ENCODE measurements at regions of chr15 and their contacts with region 1.

Region 1: GRCh38 chr15:39171944-39172368 is 408.9 kb upstream of the THBS1 start:
- DNase-seq: peak; percentile 99
- ATAC-seq: peak; percentile 91
- H3K4me3 ChIP-seq: no peak overlapping the region
- H3K27ac ChIP-seq: peak overlapping the region; percentile 91
- H3K4me1 ChIP-seq: peaks cover 14% of the 10 kb centered on the region
- H3K27me3 ChIP-seq: no peaks in the 10 kb centered on the region
- CTCF ChIP-seq: peak; percentile 86
- POLR2A ChIP-seq: peak; percentile 48
- RAD21 ChIP-seq: peak; percentile 99

Region 2: DNA sequence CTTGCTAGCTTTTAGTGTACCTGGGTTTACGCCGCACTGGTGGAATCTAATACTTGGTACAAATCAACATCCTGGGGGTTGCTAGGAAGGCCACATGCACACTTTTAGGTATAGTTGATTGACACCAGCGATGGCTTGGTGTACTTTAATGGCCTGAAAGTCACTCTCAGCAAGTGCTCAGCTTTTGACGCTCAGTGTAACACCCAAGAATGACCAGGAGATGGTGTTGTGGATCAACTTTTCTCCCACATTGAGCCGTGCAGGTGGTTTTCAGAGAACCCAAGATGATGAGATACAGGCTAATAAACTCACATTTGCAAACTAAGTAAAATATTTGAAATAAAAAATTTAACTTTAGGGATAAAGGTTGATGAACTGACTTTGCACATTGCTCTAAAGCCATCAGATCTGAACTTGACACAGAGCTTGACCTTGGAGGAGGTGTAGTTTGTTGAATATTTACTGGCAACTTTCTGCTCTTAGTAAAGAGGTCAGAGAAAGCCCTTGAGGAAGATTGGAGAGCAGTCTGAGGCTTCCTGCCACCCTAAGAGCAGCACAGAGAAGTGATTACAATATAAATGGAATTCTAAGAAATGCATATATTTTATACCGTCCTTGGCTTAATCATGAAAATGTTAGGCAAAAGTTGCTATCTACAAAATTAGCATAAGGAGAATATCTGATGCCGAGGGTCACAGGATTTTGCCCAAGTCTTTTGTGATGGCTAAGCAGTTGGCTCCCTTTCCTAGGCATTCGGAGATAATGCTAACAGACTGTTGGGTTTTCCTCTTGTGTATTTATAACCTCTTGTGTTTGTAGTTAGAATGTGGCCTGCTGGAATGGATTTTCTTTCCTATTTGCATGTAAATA is 463.9 kb before region 1 on chr15:
- CTCF ChIA-PET with region 1: no interaction called
- POLR2A ChIA-PET with region 1: no interaction called
- dilution Hi-C with region 1: no loop called
- in situ Hi-C with region 1: loop called (anchors 5 kb)
- intact Hi-C with region 1: loop called (anchors 2 kb)
- DNase-seq: peak; percentile 80
- ATAC-seq: peak; percentile 93
- H3K4me3 ChIP-seq: no peak overlapping the region
- H3K27ac ChIP-seq: peak overlapping the region; percentile 74; the same call in 1 of the 2 replicates
- H3K4me1 ChIP-seq: peaks cover 7% of the 10 kb centered on the region
- H3K27me3 ChIP-seq: no peaks in the 10 kb centered on the region
- CTCF ChIP-seq: peak; percentile 82
- POLR2A ChIP-seq: no peak; the same call in 1 of the 2 replicates
- RAD21 ChIP-seq: peak; percentile 95

Region 3: DNA sequence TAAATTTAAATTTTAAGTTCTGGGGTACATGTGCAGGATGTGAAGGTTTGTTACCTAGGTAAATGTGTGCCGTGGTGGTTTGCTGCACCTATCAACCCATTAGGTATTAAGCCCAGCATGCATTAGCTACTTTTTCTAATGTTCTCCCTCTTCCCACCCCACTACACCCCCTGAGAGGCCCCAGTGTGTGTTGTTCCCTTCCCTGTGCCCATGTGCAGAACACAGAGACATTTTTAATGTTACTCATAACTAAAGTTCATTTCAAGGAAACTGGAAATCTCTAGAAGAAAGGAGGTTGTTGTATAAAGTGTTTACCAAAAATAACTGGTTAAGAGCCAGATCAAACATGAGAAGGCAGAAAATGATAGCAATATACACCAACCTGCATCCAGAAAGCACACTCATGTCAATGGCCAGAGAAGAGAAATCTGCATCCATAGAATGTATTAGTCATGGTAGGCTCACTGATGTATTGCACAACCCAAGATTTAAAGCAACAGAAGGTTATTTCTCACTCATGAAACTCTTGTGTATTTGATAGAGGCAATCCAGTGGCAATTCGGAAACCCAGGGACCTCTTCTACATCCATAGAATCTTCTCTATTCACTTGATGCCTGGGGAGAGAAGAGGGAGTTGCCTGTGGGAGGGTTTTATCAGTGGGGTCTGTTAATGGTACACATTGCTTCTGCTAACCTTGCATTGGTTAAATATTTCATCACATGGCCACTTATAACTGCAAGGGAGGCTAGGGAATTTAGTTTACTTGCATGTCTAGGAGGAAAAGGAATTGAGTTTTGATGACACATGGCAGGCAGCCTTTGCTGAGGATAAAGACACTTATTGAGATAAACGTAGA is 285.4 kb before region 1 on chr15:
- CTCF ChIA-PET with region 1: no interaction called
- POLR2A ChIA-PET with region 1: interaction called, 3 read pairs
- dilution Hi-C with region 1: no loop called
- in situ Hi-C with region 1: no loop called
- intact Hi-C with region 1: loop called (anchors 2 kb)
- DNase-seq: peak; percentile 93
- ATAC-seq: peak; percentile 70
- H3K4me3 ChIP-seq: peak overlapping the region; percentile 39
- H3K27ac ChIP-seq: peak overlapping the region; percentile 97
- H3K4me1 ChIP-seq: peaks cover 22% of the 10 kb centered on the region
- H3K27me3 ChIP-seq: no peaks in the 10 kb centered on the region
- CTCF ChIP-seq: no peak
- POLR2A ChIP-seq: no peak; the same call in 1 of the 2 replicates
- RAD21 ChIP-seq: 0 out of 2 replicates have a peak, but pooled peaks have one; percentile 9

Region 4: DNA sequence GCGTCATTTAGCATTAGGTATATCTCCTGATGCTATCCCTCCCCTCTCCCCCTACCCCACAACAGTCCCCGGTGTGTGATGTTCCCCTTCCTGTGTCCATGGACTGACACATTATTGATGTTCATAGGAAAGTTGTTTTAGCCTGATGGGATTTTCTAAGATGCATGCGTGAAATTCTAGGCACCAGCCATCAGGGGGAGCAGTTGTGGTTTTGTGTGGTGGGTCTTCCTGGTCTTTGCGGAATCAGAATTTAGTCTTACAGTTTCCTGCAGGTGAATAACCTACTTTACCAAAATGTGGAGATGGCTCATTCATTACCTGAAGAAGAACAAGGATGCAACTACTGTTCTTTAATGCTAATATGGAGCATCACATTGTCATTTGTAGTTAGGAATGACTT is 46.1 kb before region 1 on chr15:
- CTCF ChIA-PET with region 1: interaction called, 4 read pairs
- POLR2A ChIA-PET with region 1: no interaction called
- dilution Hi-C with region 1: no loop called
- in situ Hi-C with region 1: no loop called
- intact Hi-C with region 1: loop called (anchors 2 kb)
- DNase-seq: peak; percentile 68
- ATAC-seq: no peak
- H3K4me3 ChIP-seq: no peak overlapping the region
- H3K27ac ChIP-seq: peak overlapping the region; percentile 39; the same call in 1 of the 2 replicates
- H3K4me1 ChIP-seq: peaks cover 37% of the 10 kb centered on the region
- H3K27me3 ChIP-seq: no peaks in the 10 kb centered on the region
- CTCF ChIP-seq: peak; percentile 64
- POLR2A ChIP-seq: no peak
- RAD21 ChIP-seq: peak; percentile 62

Region 5: DNA sequence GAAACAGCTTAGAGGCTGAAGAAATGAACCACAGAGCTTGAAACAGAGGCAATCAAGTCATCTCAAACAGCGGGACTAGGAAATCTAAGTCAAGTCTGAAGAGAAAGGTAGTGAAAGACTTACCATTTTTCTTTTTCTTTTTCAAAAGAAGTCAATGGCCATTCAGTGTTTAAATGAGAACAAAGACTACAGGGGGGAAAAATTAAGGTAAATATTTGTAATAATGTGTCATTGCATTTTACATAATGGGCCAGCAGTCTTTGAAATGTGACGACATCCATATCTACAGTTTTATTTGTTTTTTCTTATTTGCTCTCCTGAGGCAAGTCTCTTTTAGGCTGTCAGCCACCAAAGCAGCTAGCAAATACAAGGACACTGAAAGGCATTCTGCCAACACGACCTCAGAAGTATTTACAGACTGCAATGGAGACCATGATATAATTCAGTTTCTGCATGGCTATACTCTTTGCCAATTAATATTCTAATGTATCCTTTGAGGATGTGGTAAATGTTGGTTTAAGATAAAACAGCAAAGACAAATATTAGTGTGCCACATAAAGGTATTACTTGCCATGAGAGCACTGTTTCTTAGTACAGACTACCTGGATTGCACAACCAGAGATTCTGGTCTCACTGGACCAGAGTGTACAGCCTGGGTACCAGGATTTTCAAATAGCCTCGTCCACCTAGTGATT is 101.9 kb after region 1 on chr15:
- CTCF ChIA-PET with region 1: no interaction called
- POLR2A ChIA-PET with region 1: no interaction called
- dilution Hi-C with region 1: no loop called
- in situ Hi-C with region 1: no loop called
- intact Hi-C with region 1: no loop called
- DNase-seq: peak; percentile 44
- ATAC-seq: no peak
- H3K4me3 ChIP-seq: no peak overlapping the region
- H3K27ac ChIP-seq: no peak overlapping the region
- H3K4me1 ChIP-seq: peaks cover 24% of the 10 kb centered on the region
- H3K27me3 ChIP-seq: no peaks in the 10 kb centered on the region
- CTCF ChIP-seq: no peak
- POLR2A ChIP-seq: no peak
- RAD21 ChIP-seq: no peak

Region 6: GRCh38 chr15:39472621-39473297 is 300.8 kb after region 1 on chr15:
- CTCF ChIA-PET with region 1: no interaction called
- POLR2A ChIA-PET with region 1: no interaction called
- dilution Hi-C with region 1: no loop called
- in situ Hi-C with region 1: loop called (anchors 10 kb)
- intact Hi-C with region 1: loop called (anchors 1 kb)
- DNase-seq: peak; percentile 99
- ATAC-seq: peak; percentile 93
- H3K4me3 ChIP-seq: no peak overlapping the region
- H3K27ac ChIP-seq: peak overlapping the region; percentile 99; the same call in 1 of the 2 replicates
- H3K4me1 ChIP-seq: peaks cover 15% of the 10 kb centered on the region; the same call in 1 of the 2 replicates
- H3K27me3 ChIP-seq: no peaks in the 10 kb centered on the region
- CTCF ChIP-seq: no peak
- POLR2A ChIP-seq: no peak
- RAD21 ChIP-seq: no peak

Region 7: DNA sequence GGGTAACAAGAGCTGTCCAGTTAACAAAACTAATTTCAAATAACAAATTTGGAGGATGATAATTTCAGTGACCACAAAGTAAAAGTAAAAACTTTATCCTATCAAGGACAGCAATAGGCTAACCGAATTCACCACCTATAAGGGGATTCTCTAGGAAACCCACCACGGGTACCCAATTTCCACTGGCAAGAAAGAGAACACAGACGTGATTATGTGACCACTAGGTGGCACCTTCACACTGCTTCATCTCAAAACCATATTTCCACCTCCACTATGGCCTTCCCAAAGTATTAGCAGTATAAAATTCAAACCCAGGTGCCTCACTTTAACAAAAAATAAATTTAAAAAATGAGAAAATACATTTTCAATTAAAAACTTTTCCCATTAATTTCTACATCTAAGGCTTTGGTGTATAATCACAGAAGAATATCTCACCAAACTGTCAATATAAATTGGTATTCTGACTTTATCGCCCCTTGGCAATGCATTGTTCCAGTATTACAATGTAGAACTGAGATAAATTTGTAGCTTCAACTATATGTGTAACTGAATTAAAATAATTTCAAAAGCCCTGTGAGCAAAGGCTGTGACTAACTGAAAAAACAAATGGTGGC is 514.2 kb after region 1 on chr15:
- CTCF ChIA-PET with region 1: no interaction called
- POLR2A ChIA-PET with region 1: no interaction called
- dilution Hi-C with region 1: no loop called
- in situ Hi-C with region 1: no loop called
- intact Hi-C with region 1: loop called (anchors 10 kb)
- DNase-seq: peak; percentile 70
- ATAC-seq: peak; percentile 85
- H3K4me3 ChIP-seq: no peak overlapping the region
- H3K27ac ChIP-seq: no peak overlapping the region
- H3K4me1 ChIP-seq: peaks cover 2% of the 10 kb centered on the region
- H3K27me3 ChIP-seq: no peaks in the 10 kb centered on the region
- CTCF ChIP-seq: peak; percentile 72
- POLR2A ChIP-seq: no peak
- RAD21 ChIP-seq: peak; percentile 90